Posterior vena cava (tissue), 2 donors: ENCODE measurements at regions of chr7 and their contacts with region 1.

Region 1: GRCh38 chr7:100221231-100221718 is 1.5 kb downstream of the PVRIG start:
- DNase-seq: no peak

Region 2: GRCh38 chr7:100132697-100133151 is 88.6 kb before region 1 on chr7:
- intact Hi-C with region 1: loop called in 1 of 2 experiments (anchors 5 kb)
- DNase-seq: no peak